GM10248 (cell line): ENCODE measurements at regions of chr22 and their contacts with region 1.

Region 1: DNA sequence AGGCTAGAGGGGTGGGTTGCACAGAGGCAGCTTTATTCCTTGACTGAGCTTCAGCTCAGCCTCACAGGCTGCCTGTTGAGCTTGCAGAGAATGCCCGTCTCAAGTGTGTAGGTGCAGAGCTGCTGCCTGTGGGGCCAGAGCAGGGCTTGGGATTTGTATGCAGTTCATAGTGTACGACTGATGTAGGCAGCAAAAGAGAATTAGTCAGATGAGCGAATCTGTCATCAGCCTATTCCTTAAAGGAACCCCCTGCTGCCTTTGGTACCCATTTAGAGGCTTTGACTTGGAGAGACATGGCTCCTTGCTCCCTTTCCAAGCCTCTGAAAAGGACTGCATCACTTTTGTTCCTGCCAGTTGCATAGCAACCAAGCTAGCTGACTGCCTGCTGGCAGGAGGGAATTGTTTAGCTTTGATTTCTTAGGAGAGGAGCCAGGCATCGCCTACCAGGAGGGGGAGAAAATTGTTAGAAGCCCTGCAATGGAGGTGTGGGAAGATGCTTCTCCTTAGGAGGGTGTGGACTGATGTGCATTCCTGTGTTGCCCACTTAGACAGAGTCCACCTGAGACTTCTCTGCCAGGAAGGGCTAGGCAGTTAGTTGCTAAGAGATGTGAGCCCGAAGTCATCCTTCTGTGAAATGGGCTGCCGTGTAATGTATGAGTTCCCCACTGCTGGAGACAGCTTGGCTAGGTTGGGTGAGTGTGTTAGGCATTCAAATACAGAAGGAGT is 10.9 kb downstream of the ACO2 start:
- DNase-seq: no peak
- CTCF ChIP-seq: no peak

Region 2: DNA sequence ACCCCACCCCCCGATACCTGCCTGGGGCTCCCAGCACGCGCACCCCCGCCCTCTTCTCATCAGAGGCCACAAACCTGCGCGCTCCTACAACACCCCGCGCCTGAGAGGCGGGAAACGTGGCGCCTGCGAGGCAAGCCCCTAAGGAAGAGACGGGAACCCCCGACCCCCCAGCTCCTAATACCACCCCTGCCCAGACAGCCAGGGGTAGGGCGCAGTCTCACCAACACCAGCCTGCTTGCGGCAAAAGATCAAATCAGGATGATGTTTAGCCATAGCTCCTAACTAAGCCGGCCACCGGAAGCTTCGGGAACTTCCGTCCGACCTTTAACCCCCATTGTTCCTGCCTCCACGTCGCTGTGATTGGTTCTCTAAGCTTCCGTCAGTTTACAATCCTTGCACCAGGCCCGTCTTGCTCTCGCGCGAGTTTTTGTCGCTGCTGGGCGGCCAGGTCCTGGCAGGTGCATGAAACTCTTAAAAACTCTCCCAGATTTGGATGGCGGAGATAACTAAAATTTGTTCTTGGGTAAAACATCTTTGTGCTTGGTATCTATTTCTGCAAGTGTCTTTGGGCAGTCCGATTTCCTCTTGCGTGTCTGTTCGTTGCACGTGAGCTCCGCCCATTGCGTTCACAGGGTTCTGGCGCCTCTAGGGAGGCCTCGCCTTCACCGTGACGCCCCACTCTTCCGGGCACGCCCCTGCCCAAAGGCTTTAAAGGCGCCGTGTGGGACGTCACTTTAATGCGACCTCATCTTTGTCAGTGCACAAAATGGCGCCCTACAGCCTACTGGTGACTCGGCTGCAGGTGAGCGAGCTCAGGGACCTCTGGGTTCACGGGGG is 11.2 kb before region 1 on chr22 and contains the starts of genes ACO2 and PHF5A:
- CTCF ChIA-PET with region 1: interaction called, 9 read pairs
- POLR2A ChIA-PET with region 1: interaction called, 13 read pairs
- DNase-seq: peak; percentile 96
- CTCF ChIP-seq: no peak

Region 3: DNA sequence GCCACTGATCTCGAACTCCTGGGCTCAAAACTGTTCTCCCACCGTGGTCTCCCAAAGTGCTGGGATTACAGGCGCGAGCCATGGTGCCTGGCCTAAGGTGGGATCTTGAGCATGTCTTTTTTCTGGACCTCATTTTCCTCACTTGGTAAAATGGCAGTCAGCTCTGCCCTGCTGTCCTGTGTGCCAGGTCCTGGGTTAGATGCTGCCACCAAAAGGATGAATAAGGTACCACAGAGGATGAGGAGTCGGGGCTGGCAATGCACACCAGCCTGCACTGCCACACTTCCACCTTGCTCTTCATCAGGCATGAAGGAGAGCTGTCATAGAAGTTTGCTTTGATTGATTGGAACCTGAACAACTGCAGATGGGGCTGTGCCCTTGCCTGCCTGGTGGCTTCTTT is 21.4 kb after region 1 on chr22:
- CTCF ChIA-PET with region 1: interaction called, 10 read pairs
- POLR2A ChIA-PET with region 1: no interaction called
- DNase-seq: peak; percentile 65
- CTCF ChIP-seq: no peak

Region 4: DNA sequence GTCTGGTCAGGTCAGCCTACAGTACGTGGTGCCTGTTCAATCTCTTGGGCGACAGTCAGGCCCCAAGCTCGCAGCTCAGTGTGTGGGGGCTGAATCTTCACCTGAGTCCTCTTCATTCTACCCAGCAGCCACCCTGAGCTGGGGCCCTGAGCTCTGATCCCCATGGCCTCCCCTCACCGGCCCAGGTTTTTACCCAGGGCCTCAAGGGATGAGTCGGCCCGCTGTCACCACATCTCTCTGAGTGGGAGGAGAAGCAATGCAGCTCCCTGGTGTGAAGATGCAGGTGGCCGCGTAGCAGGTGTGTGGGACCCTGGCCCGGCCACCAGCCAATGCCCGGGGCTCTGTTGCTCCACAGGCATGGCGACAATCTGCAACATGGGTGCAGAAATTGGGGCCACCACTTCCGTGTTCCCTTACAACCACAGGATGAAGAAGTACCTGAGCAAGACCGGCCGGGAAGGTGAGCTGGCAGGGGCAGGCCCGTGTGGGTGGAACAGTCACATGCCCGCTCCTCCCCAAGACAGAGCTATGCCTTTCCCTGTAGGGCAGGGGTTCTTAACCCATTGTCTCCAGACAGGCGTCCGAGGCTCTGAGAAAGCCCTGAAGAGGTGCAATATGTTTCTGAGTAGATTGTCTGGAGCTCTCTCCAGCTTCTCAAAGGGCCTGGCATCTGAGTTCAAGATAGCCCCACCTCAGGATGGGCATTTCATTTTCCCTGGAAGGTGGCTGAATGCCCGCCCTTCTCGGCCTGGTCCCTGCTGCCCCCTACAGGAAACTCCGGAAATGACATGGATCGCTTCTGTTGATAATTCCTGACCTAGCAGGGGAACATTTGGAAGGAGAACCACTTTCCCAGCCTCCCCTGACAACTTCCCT is 37.6 kb after region 1 on chr22:
- CTCF ChIA-PET with region 1: interaction called, 15 read pairs
- POLR2A ChIA-PET with region 1: interaction called, 3 read pairs
- DNase-seq: peak; percentile 68
- CTCF ChIP-seq: peak; percentile 73

Region 5: GRCh38 chr22:41532908-41533825 is 53.3 kb after region 1 on chr22:
- CTCF ChIA-PET with region 1: interaction called, 11 read pairs
- POLR2A ChIA-PET with region 1: no interaction called
- DNase-seq: peak; percentile 81
- CTCF ChIP-seq: peak; percentile 83